ENCODE measurements at regions of chr13 and their contacts with region 1.

Region 1: GRCh38 chr13:105991622-105992277 is 543.7 kb downstream of the EFNB2 start:
- DNase-seq: peak; percentile 37 to 43
- H3K4me3 ChIP-seq: no peak overlapping the region
- H3K4me3 Mint-ChIP-seq: no peak overlapping the region
- H3K27ac Mint-ChIP-seq: peak overlapping the region; percentile 2
- H3K4me1 ChIP-seq: peaks cover 11% of the 10 kb centered on the region
- H3K4me1 Mint-ChIP-seq: peaks cover 47% of the 10 kb centered on the region
- H3K27me3 ChIP-seq: no peaks in the 10 kb centered on the region
- H3K27me3 Mint-ChIP-seq: no peaks in the 10 kb centered on the region
- CTCF ChIP-seq: no peak

Region 2: DNA sequence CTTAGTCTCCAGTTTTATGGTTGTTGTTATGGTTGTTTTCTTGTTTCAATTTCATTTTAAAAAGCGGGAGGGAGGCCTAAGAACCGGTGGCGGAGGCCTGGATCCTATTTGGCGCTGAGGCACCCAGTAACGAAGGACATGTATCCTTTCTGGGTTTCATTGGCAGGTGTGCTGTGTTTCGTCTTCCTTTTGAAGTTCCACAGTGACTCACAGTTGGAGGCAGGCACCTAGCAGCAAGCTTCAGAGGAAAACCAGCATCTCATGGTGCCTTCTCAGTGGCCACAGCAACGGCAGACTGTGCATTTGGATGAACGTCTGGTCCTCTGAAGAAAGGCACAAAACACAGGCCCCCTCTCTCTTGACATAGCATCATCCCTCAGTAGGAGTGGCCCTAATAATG is 153.5 kb before region 1 on chr13:
- CTCF ChIA-PET with region 1: no interaction called
- POLR2A ChIA-PET with region 1: no interaction called
- intact Hi-C with region 1: no loop called
- DNase-seq: no peak
- H3K4me3 ChIP-seq: no peak overlapping the region
- H3K4me3 Mint-ChIP-seq: no peak overlapping the region
- H3K27ac Mint-ChIP-seq: no peak overlapping the region
- H3K4me1 ChIP-seq: no peaks in the 10 kb centered on the region
- H3K4me1 Mint-ChIP-seq: peaks cover 6% of the 10 kb centered on the region
- H3K27me3 ChIP-seq: no peaks in the 10 kb centered on the region
- H3K27me3 Mint-ChIP-seq: no peaks in the 10 kb centered on the region
- CTCF ChIP-seq: no peak

Region 3: DNA sequence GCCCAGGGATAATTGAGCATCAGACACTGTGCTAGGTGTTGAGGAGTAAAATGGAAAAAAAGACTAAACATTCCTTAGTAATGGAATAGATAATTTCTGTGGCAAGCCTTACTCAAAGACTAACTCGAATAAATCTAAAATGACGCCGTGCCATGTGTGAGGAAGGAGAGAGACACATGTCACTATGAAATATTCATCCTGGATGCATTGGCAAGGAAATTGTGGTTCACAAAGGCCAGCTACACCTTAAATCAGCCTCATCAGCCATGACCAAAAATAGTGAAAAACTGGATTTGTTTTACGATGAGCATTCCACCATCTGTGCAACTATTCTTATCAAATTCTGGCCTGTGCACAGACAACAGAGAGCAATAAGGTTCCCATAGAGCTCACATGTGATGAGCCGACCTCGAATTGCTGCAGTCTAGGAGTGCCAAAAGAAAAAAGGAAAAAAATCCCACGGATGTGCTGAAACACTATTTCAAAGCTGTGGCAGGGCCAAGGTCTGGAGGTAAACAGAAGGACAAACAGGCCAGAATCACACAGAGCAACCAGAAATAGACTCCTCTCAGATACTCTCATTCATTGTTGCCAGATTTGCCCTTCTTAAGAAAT is 38.0 kb after region 1 on chr13:
- CTCF ChIA-PET with region 1: no interaction called
- POLR2A ChIA-PET with region 1: no interaction called
- intact Hi-C with region 1: loop called (anchors 1 kb)
- DNase-seq: no peak
- H3K4me3 ChIP-seq: no peak overlapping the region
- H3K4me3 Mint-ChIP-seq: no peak overlapping the region
- H3K27ac Mint-ChIP-seq: no peak overlapping the region
- H3K4me1 ChIP-seq: no peaks in the 10 kb centered on the region
- H3K4me1 Mint-ChIP-seq: peaks cover 7% of the 10 kb centered on the region
- H3K27me3 ChIP-seq: no peaks in the 10 kb centered on the region
- H3K27me3 Mint-ChIP-seq: no peaks in the 10 kb centered on the region
- CTCF ChIP-seq: no peak